ENCODE measurements at regions of chr12 and their contacts with region 1.

Region 1: GRCh38 chr12:40312982-40313576 is 88.3 kb downstream of the LRRK2 start:
- DNase-seq: no peak
- H3K4me3 ChIP-seq: no peak overlapping the region
- H3K27ac ChIP-seq: no peak overlapping the region
- H3K4me1 ChIP-seq: no peaks in the 10 kb centered on the region
- H3K27me3 ChIP-seq: no peaks in the 10 kb centered on the region
- CTCF ChIP-seq: peak in 2 of 3 experiments; percentile 16 to 53

Region 2: DNA sequence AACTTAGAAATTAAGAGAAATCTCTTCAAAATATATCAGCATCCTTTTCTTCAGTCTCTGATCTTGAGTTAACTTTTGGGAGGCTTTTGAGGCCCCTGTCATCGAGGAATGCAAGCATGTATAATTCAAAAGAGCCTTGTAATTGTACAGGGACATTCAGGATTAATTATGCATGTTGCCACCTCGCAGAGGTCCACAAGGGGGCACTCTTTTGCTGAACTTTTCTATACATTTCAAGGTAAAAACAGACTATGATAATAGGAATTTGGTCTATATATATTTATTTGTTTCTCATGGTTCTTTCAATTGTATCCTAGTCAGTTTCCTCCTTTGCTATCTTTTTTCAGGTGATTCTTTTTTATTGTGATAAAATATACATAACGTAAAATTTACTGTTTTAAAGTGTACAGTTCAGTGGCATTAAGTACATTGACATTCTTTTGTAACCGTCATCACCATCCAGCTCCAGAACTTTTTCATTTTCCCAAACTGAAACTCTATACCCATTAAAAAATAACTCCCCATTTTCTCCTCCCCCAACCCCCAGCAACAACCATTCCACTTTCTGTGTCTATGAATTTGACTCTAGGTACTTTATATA is 160.2 kb before region 1 on chr12:
- intact Hi-C with region 1: loop called (anchors 5 kb)
- DNase-seq: peak in 1 of 2 donors; percentile 73
- H3K4me3 ChIP-seq: no peak overlapping the region
- H3K27ac ChIP-seq: no peak overlapping the region
- H3K4me1 ChIP-seq: no peaks in the 10 kb centered on the region
- H3K27me3 ChIP-seq: no peaks in the 10 kb centered on the region
- CTCF ChIP-seq: peak; percentile 37 to 81 (median 73)

Region 3: GRCh38 chr12:40253936-40254335 is 59.1 kb before region 1 on chr12:
- intact Hi-C with region 1: no loop called
- DNase-seq: no peak
- H3K4me3 ChIP-seq: no peak overlapping the region
- H3K27ac ChIP-seq: no peak overlapping the region
- H3K4me1 ChIP-seq: no peaks in the 10 kb centered on the region
- H3K27me3 ChIP-seq: no peaks in the 10 kb centered on the region
- CTCF ChIP-seq: no peak

Region 4: DNA sequence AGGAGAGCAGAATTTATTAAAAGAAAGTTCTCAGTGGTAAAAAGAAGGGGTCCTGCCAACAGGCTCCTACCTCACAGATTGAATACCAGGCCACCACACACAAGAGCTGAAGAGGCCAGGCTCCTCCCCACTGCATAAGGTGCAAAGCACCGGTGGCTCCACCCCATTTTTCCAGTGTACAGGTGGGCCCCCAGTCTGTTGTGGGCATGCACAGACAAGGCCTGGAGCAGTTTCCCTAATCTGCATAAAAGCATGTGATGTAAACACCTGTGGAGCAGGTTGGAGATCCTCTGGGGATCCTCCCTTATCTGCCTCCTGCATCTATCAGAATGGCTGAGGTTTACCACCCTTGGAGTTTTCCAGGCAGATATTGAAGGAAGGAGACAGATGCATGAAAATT is 829.3 kb after region 1 on chr12:
- intact Hi-C with region 1: no loop called
- DNase-seq: no peak
- H3K4me3 ChIP-seq: no peak overlapping the region
- H3K27ac ChIP-seq: peak overlapping the region in 1 of 2 donors; percentile 45
- H3K4me1 ChIP-seq: peaks cover 8 to 17% of the 10 kb centered on the region in 2 donors
- H3K27me3 ChIP-seq: no peaks in the 10 kb centered on the region
- CTCF ChIP-seq: no peak